Left ventricle myocardium inferior (tissue), 1 donor: ENCODE measurements at regions of chr12 and their contacts with region 1.

Region 1: DNA sequence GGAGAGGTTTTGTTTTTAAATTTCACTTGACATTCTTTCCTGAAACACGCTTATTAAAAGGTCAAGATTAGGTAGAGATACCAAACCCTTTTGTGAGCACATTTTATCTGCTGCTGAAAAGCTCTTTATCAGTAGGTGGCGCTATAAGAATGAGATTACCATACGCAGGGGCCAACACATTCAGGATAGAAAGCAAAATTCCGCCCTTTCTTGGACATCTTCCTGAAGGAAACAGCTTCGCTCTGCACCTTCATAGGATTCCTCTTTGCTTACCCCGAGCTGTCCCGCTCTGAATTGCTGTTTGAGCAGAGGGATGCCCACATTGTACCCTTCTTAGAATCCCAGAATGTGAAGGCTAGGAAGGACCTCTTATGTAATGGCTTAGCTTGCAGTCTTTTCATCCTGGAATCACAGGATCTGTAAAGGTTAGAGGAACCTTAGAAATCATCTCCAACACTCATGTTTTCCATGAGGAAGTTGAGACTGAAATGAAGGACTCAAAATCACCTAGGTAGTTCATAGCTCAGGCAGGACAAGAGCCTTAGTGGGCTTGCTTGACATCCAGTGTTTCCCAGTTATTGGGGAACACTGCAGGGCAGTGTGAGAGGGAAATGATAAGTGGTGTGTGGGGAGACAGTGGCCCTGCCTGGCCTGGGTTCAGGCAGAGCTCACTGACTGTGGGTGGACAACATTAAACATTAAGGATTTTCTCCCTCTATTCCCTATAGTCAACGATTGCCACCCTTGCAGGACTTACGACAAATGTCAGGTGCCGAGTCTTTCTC is 38.7 kb upstream of the CRY1 start:
- DNase-seq: no peak
- H3K4me3 ChIP-seq: no peak overlapping the region
- H3K27ac ChIP-seq: no peak overlapping the region
- H3K4me1 ChIP-seq: no peaks in the 10 kb centered on the region
- H3K27me3 ChIP-seq: peaks cover 5% of the 10 kb centered on the region
- CTCF ChIP-seq: peak; percentile 81

Region 2: GRCh38 chr12:106801830-106802533 is 330.0 kb before region 1 on chr12:
- intact Hi-C with region 1: no loop called
- DNase-seq: no peak
- H3K4me3 ChIP-seq: no peak overlapping the region
- H3K27ac ChIP-seq: peak overlapping the region; percentile 41
- H3K4me1 ChIP-seq: peaks cover 33% of the 10 kb centered on the region
- H3K27me3 ChIP-seq: no peaks in the 10 kb centered on the region
- CTCF ChIP-seq: no peak

Region 3: DNA sequence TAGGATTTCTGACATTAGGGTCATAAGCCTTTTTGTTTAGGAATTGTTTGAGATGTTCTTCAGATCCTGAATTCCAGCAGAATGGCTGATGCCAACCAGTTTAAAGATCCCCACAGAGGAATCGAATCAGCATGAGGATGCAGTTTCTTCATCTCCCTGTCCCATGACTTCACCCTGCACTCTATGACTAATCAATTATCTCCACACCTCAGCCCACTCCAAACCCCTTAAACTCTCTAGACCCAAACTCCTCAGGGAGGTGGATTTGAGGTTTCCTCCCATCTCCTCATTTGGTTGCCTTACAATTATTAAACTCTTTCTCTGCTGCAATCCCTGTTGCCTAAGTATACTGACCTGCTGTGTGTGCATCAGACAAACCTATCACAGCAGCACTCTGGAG is 47.8 kb after region 1 on chr12:
- intact Hi-C with region 1: no loop called
- DNase-seq: no peak
- H3K4me3 ChIP-seq: no peak overlapping the region
- H3K27ac ChIP-seq: no peak overlapping the region
- H3K4me1 ChIP-seq: no peaks in the 10 kb centered on the region
- H3K27me3 ChIP-seq: peaks cover 82% of the 10 kb centered on the region
- CTCF ChIP-seq: no peak

Region 4: DNA sequence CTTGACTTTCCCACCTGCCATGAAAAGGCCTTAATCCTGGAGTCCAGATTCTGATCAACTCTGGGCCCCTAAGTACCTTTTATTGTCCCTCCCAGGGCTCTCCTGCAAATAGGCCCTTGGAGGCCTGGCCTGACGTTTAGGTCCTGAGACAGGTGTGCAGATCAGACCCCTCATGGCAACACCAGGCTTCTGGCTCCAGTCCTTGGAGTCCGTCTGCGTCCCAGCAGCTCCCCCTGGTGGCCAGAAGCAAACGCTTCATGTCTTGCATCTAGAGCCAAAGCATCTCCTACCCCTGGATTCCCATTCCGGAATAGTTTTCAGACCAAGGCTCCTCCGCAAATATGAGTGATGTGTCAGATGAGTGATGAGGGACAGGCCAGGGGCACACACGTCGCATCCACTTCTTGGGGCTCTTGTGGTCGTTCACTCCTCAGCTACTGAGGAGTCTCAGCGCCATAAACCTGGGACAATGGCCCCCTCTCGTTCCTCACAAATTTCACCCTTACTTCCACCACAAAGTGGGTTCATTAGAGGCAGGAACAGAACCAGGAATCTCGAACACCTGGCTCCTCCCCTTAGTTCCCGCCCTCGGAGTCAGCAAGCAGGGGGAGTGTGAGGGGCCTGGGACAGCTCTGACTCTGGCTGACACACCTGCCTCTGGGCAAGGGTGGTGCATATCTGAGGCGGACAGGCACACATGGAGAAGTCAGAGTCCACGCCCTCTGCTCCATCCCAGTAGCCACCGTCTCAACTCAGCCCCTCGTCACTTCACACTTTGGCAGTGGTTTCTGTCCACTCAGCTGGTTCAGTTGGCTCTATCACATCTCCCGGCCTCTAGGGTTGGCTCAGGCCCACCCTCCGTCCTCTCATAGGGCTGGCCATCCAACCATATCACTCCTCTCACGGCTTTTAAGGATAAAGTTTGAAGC is 475.7 kb after region 1 on chr12:
- intact Hi-C with region 1: loop called (anchors 5 kb)
- DNase-seq: peak; percentile 77
- H3K4me3 ChIP-seq: no peak overlapping the region
- H3K27ac ChIP-seq: no peak overlapping the region
- H3K4me1 ChIP-seq: peaks cover 15% of the 10 kb centered on the region
- H3K27me3 ChIP-seq: peaks cover 22% of the 10 kb centered on the region
- CTCF ChIP-seq: peak; percentile 89

Region 5: DNA sequence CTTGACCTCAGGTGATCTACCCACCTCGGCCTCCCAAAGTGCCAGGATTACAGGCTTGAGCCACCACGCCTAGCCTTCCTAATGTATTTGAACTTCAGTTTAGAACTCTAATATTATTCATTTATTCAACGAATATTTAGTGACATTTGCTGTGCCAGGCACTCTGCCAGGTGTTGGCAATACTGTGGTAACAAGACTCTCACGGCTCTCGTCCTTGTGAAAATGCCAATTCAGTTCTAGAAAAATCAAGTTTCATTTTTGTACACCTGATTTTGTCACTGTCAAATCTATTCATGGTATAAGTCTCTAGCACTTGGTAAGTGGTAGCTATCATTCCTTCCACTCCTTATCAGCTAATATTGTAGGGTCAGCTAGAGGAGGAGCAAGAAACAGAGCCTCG is 547.3 kb after region 1 on chr12:
- intact Hi-C with region 1: no loop called
- DNase-seq: no peak
- H3K4me3 ChIP-seq: no peak overlapping the region
- H3K27ac ChIP-seq: no peak overlapping the region
- H3K4me1 ChIP-seq: no peaks in the 10 kb centered on the region
- H3K27me3 ChIP-seq: peaks cover 58% of the 10 kb centered on the region
- CTCF ChIP-seq: no peak